Activated CD4-positive, alpha-beta memory T cell treated with anti-CD3 and anti-CD28 coated beads for 36 hours (primary cell): ENCODE measurements at regions of chr2 and their contacts with region 1.

Region 1: GRCh38 chr2:84991404-84992151 is 20.6 kb downstream of the KCMF1 start:
- DNase-seq: no peak
- H3K4me3 Mint-ChIP-seq: no peak overlapping the region
- H3K27ac Mint-ChIP-seq: no peak overlapping the region
- H3K4me1 Mint-ChIP-seq: peaks cover 40% of the 10 kb centered on the region
- H3K27me3 Mint-ChIP-seq: no peaks in the 10 kb centered on the region

Region 2: GRCh38 chr2:85017411-85018048 is 26.0 kb after region 1 on chr2:
- CTCF ChIA-PET with region 1: interaction called, 6 read pairs
- POLR2A ChIA-PET with region 1: no interaction called
- intact Hi-C with region 1: loop called (anchors 2 kb)
- DNase-seq: no peak
- H3K4me3 Mint-ChIP-seq: no peak overlapping the region
- H3K27ac Mint-ChIP-seq: peak overlapping the region; percentile 66
- H3K4me1 Mint-ChIP-seq: peaks cover 70% of the 10 kb centered on the region
- H3K27me3 Mint-ChIP-seq: no peaks in the 10 kb centered on the region